ENCODE measurements at regions of chr3 and their contacts with region 1.

Region 1: GRCh38 chr3:128311441-128311844 is 155.2 kb downstream of the DNAJB8 start:
- DNase-seq: no peak
- ATAC-seq: no peak
- H3K4me3 ChIP-seq: no peak overlapping the region
- H3K27ac ChIP-seq: no peak overlapping the region
- H3K4me1 ChIP-seq: peaks cover 0 to under 1% of the 10 kb centered on the region in 2 experiments; a peak in 2 of 5 replicates
- H3K27me3 ChIP-seq: no peaks in the 10 kb centered on the region
- CTCF ChIP-seq: no peak
- EP300 ChIP-seq: no peak
- POLR2A ChIP-seq: no peak
- RAD21 ChIP-seq: no peak

Region 2: DNA sequence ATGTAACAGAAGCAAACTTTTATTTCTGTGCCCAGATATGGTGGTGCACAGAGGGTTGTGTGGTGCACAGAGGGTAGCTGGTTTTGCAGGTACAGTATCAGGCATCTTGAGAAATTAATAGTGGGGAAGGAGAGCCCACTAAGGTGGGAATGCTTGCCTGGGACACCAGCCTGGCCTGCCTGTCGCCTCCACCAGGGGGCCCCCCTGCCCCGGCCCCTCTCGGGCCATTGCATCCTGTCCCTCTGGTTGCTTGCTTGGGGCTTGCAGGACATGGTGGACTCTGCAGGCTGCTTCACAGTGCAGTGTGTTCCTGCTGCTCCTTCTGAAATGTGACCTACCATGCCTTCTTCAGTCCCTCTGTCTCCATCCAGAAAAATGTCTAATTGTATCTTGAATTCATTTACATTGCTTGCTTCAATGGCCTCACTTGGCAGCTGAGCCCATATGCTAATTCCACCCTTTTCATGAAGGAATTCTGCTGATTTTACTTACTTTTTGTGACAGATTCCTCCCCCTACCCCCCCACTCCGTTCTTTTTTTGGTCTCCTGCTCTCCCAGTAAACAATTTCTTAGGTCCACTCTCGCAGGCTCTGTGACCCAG is 84.5 kb before region 1 on chr3:
- CTCF ChIA-PET with region 1: no interaction called
- POLR2A ChIA-PET with region 1: no interaction called
- in situ Hi-C with region 1: no loop called
- intact Hi-C with region 1: loop called (anchors 5 kb)
- DNase-seq: peak; percentile 67 to 82 (median 79)
- ATAC-seq: peak; percentile 99
- H3K4me3 ChIP-seq: no peak overlapping the region
- H3K27ac ChIP-seq: no peak overlapping the region
- H3K4me1 ChIP-seq: 0 out of 5 replicates have a peak, but pooled peaks cover 0 to 3% of the 10 kb centered on the region in 2 experiments
- H3K27me3 ChIP-seq: no peaks in the 10 kb centered on the region
- CTCF ChIP-seq: peak; percentile 74 to 97 (median 87)
- EP300 ChIP-seq: no peak
- POLR2A ChIP-seq: no peak
- RAD21 ChIP-seq: peak; percentile 66 to 83